Activated naive CD4-positive, alpha-beta T cell treated with anti-CD3 and anti-CD28 coated beads for 36 hours (primary cell): ENCODE measurements at regions of chr5 and their contacts with region 1.

Region 1: GRCh38 chr5:63963080-63963735 is 963 bp upstream of the HTR1A start:
- DNase-seq: peak; percentile 52
- H3K4me3 Mint-ChIP-seq: no peak overlapping the region
- H3K27ac Mint-ChIP-seq: no peak overlapping the region
- H3K4me1 Mint-ChIP-seq: no peaks in the 10 kb centered on the region
- H3K27me3 Mint-ChIP-seq: peaks cover 40% of the 10 kb centered on the region

Region 2: DNA sequence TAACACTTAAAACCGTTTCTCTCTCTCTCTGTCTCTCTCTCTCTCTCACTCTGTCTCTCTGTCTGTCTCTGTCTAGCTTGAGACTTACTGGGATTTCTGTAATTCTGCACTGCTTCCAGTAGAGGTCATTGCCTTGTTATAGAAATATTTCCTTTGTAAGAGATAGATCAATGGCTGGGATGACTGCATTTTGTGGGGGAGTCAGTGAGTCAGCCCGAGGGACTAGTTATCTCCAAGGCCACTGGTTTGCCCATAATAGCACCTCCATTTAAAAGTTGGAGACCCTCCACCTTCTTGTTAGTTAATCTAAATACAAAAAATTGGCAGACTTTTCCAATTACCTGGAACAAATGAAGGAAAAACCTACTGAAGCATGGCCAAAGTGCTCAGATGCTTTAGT is 837.3 kb before region 1 on chr5:
- CTCF ChIA-PET with region 1: no interaction called
- intact Hi-C with region 1: loop called (anchors 2 kb)
- DNase-seq: peak; percentile 6
- H3K4me3 Mint-ChIP-seq: no peak overlapping the region
- H3K27ac Mint-ChIP-seq: no peak overlapping the region
- H3K4me1 Mint-ChIP-seq: no peaks in the 10 kb centered on the region
- H3K27me3 Mint-ChIP-seq: no peaks in the 10 kb centered on the region

Region 3: DNA sequence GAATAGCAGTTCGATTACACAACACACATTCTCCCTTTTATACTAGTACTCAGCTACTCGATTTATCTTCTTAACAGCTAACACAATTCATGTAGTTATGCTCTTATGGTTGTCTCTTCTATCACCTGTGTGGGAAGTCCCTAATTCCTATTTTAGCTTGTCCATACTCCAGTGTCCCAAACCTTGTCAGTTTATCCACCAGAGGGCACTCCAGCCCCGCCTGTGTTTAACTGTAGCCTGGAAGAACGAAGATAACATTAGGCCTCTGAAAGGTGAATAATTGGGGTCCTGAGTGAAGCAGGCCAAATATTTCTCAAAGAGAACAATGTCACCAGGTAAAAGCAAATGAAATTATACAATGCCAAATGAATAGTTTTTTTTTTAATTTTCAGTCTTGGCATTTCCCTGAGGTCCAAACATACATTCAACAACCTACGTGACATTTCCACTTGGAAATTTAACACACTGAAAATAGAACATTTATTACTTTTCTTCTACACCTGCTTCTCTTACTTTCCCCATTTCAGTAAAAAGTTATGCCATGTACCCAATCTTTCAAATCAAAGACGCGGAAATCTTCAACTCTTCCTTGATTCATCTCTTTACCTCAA is 561.7 kb before region 1 on chr5:
- CTCF ChIA-PET with region 1: no interaction called
- intact Hi-C with region 1: loop called (anchors 1 kb)
- DNase-seq: peak; percentile 55
- H3K4me3 Mint-ChIP-seq: no peak overlapping the region
- H3K27ac Mint-ChIP-seq: no peak overlapping the region
- H3K4me1 Mint-ChIP-seq: no peaks in the 10 kb centered on the region
- H3K27me3 Mint-ChIP-seq: no peaks in the 10 kb centered on the region

Region 4: GRCh38 chr5:63894690-63895089 is 68.5 kb before region 1 on chr5:
- CTCF ChIA-PET with region 1: no interaction called
- intact Hi-C with region 1: no loop called
- DNase-seq: no peak
- H3K4me3 Mint-ChIP-seq: no peak overlapping the region
- H3K27ac Mint-ChIP-seq: no peak overlapping the region
- H3K4me1 Mint-ChIP-seq: no peaks in the 10 kb centered on the region
- H3K27me3 Mint-ChIP-seq: no peaks in the 10 kb centered on the region